GM23248 (cell line): ENCODE measurements at regions of chr5 and their contacts with region 1.

Region 1: GRCh38 chr5:73902327-73903051 is 276.5 kb downstream of the ARHGEF28 start:
- DNase-seq: peak; percentile 77
- H3K4me3 ChIP-seq: no peak overlapping the region
- H3K27ac ChIP-seq: no peak overlapping the region
- H3K4me1 ChIP-seq: no peaks in the 10 kb centered on the region
- H3K27me3 ChIP-seq: no peaks in the 10 kb centered on the region

Region 2: GRCh38 chr5:74648835-74649293 is 746.4 kb after region 1 on chr5:
- in situ Hi-C with region 1: loop called (anchors 5 kb)
- DNase-seq: peak; percentile 75
- H3K4me3 ChIP-seq: no peak overlapping the region
- H3K27ac ChIP-seq: no peak overlapping the region
- H3K4me1 ChIP-seq: peaks cover 6% of the 10 kb centered on the region
- H3K27me3 ChIP-seq: no peaks in the 10 kb centered on the region